ENCODE measurements at regions of chr19 and their contacts with region 1.

Region 1: GRCh38 chr19:6222881-6223487 is 56.8 kb downstream of the MLLT1 start:
- DNase-seq: no peak
- ATAC-seq: no peak
- H3K4me3 ChIP-seq: no peak overlapping the region
- H3K27ac ChIP-seq: no peak overlapping the region
- H3K4me1 ChIP-seq: no peaks in the 10 kb centered on the region
- H3K27me3 ChIP-seq: no peaks in the 10 kb centered on the region
- CTCF ChIP-seq: no peak

Region 2: GRCh38 chr19:6340493-6341201 is 117.7 kb after region 1 on chr19:
- CTCF ChIA-PET with region 1: no interaction called
- POLR2A ChIA-PET with region 1: interaction called, 10 read pairs
- in situ Hi-C with region 1: no loop called
- intact Hi-C with region 1: no loop called
- DNase-seq: no peak
- ATAC-seq: peak; percentile 51
- H3K4me3 ChIP-seq: no peak overlapping the region
- H3K27ac ChIP-seq: no peak overlapping the region
- H3K4me1 ChIP-seq: no peaks in the 10 kb centered on the region
- H3K27me3 ChIP-seq: no peaks in the 10 kb centered on the region
- CTCF ChIP-seq: no peak

Measured in Panc1 (cell line).